ENCODE measurements at regions of chr15 and their contacts with region 1.

Region 1: GRCh38 chr15:25438601-25439368 is at the start of gene UBE3A:
- DNase-seq: peak; percentile 91
- ATAC-seq: peak; percentile 97
- H3K4me3 ChIP-seq: peak within 1 kb of the TSS; percentile 69
- H3K27ac ChIP-seq: peak within 1 kb of the TSS; percentile 93
- H3K4me1 ChIP-seq: no peaks in the 10 kb centered on the region
- H3K27me3 ChIP-seq: no peaks in the 10 kb centered on the region
- CTCF ChIP-seq: peak; percentile 40
- POLR2A ChIP-seq: peak; percentile 91
- RAD21 ChIP-seq: peak; percentile 56
- total RNA-seq, gene UBE3A: 53.2 and 69.7 TPM in 2 replicates

Region 2: DNA sequence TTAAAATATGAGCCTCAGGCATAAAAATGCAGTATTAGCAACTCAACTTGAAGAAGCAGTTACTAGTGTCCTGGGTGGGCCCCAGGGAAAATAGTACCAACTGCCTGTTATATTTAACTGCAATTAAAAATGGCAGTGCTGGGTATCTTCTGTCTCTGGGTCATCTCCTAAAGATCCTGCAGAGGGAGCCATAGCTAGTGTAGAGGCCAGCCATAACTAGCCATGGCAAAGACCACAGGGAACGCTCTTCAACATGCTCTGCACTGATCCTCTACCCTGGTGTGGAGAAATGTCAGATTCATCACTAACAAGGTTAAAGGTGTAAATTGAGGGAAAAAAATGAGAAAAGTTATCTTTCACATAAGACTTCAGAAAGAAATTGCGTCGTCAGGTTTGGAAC is 302.7 kb before region 1 on chr15:
- CTCF ChIA-PET with region 1: no interaction called
- POLR2A ChIA-PET with region 1: no interaction called
- dilution Hi-C with region 1: no loop called
- in situ Hi-C with region 1: loop called (anchors 10 kb)
- intact Hi-C with region 1: loop called (anchors 2 kb)
- DNase-seq: peak; percentile 15
- ATAC-seq: peak; percentile 55
- H3K4me3 ChIP-seq: no peak overlapping the region
- H3K27ac ChIP-seq: no peak overlapping the region
- H3K4me1 ChIP-seq: 0 out of 2 replicates have a peak, but pooled peaks cover 2% of the 10 kb centered on the region
- H3K27me3 ChIP-seq: no peaks in the 10 kb centered on the region
- CTCF ChIP-seq: peak; percentile 39
- POLR2A ChIP-seq: no peak
- RAD21 ChIP-seq: peak; percentile 26; the same call in 1 of the 2 replicates

Region 3: GRCh38 chr15:25333049-25333448 is 105.7 kb before region 1 on chr15:
- CTCF ChIA-PET with region 1: no interaction called
- POLR2A ChIA-PET with region 1: no interaction called
- dilution Hi-C with region 1: no loop called
- in situ Hi-C with region 1: loop called (anchors 10 kb)
- intact Hi-C with region 1: loop called (anchors 5 kb)
- DNase-seq: no peak
- ATAC-seq: no peak
- H3K4me3 ChIP-seq: no peak overlapping the region
- H3K27ac ChIP-seq: no peak overlapping the region
- H3K4me1 ChIP-seq: no peaks in the 10 kb centered on the region
- H3K27me3 ChIP-seq: no peaks in the 10 kb centered on the region
- CTCF ChIP-seq: no peak
- POLR2A ChIP-seq: no peak
- RAD21 ChIP-seq: no peak

Region 4: DNA sequence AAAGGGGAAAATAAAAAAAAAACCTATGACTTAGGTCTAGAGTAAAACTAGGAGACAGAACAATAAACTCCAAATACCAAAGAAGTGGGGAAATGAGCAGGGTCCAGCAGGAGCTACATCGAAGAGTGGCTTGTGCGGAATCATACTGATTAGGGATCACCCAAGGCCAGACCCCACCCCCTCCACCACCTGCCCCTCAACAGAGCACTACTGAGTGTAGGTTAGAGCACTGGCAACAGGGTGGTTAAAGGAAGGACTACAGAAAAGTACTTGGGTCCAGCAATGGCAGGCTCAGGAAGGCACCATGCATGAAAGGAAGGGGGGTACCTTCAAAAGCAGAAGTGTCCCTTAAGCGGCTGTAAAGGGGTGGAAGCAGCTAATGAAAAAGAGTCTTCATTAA is 96.2 kb before region 1 on chr15:
- CTCF ChIA-PET with region 1: no interaction called
- POLR2A ChIA-PET with region 1: no interaction called
- dilution Hi-C with region 1: no loop called
- in situ Hi-C with region 1: loop called (anchors 10 kb)
- intact Hi-C with region 1: loop called (anchors 5 kb)
- DNase-seq: no peak
- ATAC-seq: no peak
- H3K4me3 ChIP-seq: no peak overlapping the region
- H3K27ac ChIP-seq: no peak overlapping the region
- H3K4me1 ChIP-seq: no peaks in the 10 kb centered on the region
- H3K27me3 ChIP-seq: no peaks in the 10 kb centered on the region
- CTCF ChIP-seq: no peak
- POLR2A ChIP-seq: no peak
- RAD21 ChIP-seq: no peak

Region 5: GRCh38 chr15:25372298-25372697 is 66.5 kb before region 1 on chr15:
- CTCF ChIA-PET with region 1: no interaction called
- POLR2A ChIA-PET with region 1: no interaction called
- dilution Hi-C with region 1: no loop called
- in situ Hi-C with region 1: no loop called
- intact Hi-C with region 1: loop called (anchors 5 kb)
- DNase-seq: peak; percentile 76
- ATAC-seq: peak; percentile 87
- H3K4me3 ChIP-seq: no peak overlapping the region
- H3K27ac ChIP-seq: no peak overlapping the region
- H3K4me1 ChIP-seq: peaks cover 2% of the 10 kb centered on the region
- H3K27me3 ChIP-seq: no peaks in the 10 kb centered on the region
- CTCF ChIP-seq: no peak
- POLR2A ChIP-seq: no peak
- RAD21 ChIP-seq: no peak